ENCODE measurements at regions of chr14 and their contacts with region 1.

Region 1: DNA sequence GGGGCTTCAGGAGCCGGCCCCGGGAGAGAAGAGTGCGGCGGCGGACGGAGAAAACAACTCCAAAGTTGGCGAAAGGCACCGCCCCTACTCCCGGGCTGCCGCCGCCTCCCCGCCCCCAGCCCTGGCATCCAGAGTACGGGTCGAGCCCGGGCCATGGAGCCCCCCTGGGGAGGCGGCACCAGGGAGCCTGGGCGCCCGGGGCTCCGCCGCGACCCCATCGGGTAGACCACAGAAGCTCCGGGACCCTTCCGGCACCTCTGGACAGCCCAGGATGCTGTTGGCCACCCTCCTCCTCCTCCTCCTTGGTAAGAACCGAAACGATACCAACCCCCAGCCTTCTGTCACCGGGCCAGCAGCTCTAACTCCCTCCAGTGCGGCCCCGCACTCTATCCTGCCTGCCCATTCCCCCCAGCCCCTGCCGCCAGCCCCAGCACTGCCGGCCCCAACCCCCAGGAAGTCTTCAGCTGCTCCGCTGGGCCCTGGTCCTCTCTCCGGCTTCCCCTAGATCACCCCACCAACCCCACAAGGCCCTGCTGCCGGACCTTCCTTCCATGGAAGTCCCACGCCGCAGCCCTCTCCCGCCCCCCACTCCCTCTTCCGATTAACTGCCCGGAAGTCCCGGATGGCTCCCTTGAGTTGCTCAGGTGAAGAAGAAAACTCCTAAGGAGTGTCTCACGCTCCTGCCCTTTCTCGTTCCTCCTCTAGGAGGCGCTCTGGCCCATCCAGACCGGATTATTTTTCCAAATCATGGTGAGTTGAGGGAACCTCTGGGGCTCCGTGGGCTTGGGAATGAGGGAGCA is 693 bp downstream of the LRP10 start:
- DNase-seq: peak; percentile 64
- H3K4me3 Mint-ChIP-seq: peak overlapping the region; percentile 89
- H3K27ac Mint-ChIP-seq: peak overlapping the region; percentile 80
- H3K4me1 Mint-ChIP-seq: peaks cover 19% of the 10 kb centered on the region
- H3K27me3 Mint-ChIP-seq: no peaks in the 10 kb centered on the region

Region 2: GRCh38 chr14:22589096-22589839 is 283.0 kb before region 1 on chr14 and contains the start of gene DAD1:
- intact Hi-C with region 1: loop called (anchors 2 kb)
- DNase-seq: peak; percentile 100
- H3K4me3 Mint-ChIP-seq: peak within 1 kb of the TSS; percentile 88
- H3K27ac Mint-ChIP-seq: peak within 1 kb of the TSS; percentile 95
- H3K4me1 Mint-ChIP-seq: peaks cover 51% of the 10 kb centered on the region
- H3K27me3 Mint-ChIP-seq: peaks cover 10% of the 10 kb centered on the region
- total RNA-seq, gene DAD1: 246 and 256 TPM in 2 replicates

Region 3: GRCh38 chr14:22822571-22823098 is 49.6 kb before region 1 on chr14:
- intact Hi-C with region 1: loop called (anchors 5 kb)
- DNase-seq: peak; percentile 47
- H3K4me3 Mint-ChIP-seq: peak overlapping the region; percentile 62
- H3K27ac Mint-ChIP-seq: no peak overlapping the region
- H3K4me1 Mint-ChIP-seq: peaks cover 24% of the 10 kb centered on the region
- H3K27me3 Mint-ChIP-seq: peaks cover 19% of the 10 kb centered on the region

Region 4: DNA sequence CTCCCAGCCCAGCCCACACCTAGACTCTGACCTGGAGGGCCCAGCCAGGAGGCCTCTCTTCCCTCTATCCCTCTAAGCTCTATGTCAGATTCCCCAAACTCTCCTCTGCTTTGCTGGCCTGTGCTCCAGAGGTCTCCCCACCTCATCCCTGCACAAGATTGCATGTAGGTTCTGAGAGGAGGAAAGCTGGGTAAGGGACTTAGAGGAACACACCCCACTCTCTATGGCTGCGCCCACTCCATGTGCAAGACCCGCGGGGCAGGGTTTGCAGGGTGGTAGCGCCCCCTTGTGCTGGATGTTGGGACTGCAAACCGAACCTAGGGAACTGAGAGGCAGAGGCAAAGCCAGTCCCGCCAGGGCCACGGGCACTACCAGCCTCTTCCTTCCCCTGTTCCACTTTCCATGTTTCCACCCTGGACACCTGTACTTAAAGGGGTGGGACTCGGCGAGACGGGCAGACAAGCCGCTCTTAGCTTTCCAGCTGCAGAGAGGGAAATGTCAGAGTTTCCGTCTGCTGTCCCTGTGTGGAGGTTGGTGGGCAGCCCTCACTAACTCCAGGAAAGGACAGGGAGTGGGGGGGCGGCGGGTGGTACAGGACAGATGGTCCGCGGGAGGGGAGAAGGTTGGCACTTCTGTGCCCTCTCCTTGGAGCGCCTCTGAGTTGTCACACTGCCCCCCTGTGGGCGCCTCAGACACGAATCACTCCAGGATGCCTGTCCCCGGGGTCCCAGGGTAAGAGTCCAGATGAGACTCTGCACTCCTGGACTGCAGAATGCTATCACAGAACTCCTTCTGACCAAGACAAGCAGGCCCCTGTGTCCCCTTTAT is 19.1 kb before region 1 on chr14:
- intact Hi-C with region 1: loop called (anchors 2 kb)
- DNase-seq: peak; percentile 80
- H3K4me3 Mint-ChIP-seq: peak overlapping the region; percentile 79
- H3K27ac Mint-ChIP-seq: peak overlapping the region; percentile 40
- H3K4me1 Mint-ChIP-seq: peaks cover 24% of the 10 kb centered on the region
- H3K27me3 Mint-ChIP-seq: peaks cover 9% of the 10 kb centered on the region

Region 5: DNA sequence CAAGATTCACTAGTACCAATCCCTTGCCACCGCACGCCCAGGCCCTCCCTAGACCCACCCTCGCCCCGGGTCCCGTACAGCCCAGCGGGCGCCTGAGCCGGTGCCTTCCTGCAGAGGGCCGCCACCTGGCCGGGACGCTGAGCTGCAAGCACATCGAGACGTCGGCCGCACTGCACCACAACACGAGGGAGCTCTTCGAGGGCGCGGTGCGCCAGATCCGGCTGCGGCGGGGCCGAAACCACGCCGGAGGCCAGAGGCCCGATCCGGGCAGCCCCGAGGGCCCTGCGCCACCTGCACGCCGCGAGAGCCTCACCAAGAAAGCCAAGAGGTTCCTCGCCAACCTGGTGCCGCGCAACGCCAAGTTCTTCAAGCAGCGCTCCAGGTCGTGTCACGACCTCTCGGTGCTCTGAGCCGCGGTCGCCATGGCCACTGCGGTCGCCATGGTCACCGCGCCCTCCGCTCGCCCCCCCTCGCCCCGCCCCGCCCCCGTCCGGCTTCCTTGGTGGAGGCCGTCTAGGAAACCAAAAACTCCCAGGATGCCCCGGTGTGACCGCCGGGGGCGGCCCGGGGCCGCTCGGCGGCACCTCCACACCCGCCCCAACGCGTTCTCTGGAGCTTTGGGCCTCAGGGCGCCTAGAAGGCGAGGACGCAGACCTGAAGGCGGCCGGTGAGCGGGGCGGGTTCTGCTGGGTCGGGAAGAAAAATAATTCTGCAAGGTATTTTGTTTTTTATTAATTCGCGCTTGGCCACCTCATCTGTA is 14.4 kb after region 1 on chr14:
- intact Hi-C with region 1: loop called (anchors 1 kb)
- DNase-seq: peak; percentile 67
- H3K4me3 Mint-ChIP-seq: peak overlapping the region; percentile 80
- H3K27ac Mint-ChIP-seq: peak overlapping the region; percentile 72
- H3K4me1 Mint-ChIP-seq: peaks cover 26% of the 10 kb centered on the region
- H3K27me3 Mint-ChIP-seq: peaks cover 11% of the 10 kb centered on the region

Region 6: DNA sequence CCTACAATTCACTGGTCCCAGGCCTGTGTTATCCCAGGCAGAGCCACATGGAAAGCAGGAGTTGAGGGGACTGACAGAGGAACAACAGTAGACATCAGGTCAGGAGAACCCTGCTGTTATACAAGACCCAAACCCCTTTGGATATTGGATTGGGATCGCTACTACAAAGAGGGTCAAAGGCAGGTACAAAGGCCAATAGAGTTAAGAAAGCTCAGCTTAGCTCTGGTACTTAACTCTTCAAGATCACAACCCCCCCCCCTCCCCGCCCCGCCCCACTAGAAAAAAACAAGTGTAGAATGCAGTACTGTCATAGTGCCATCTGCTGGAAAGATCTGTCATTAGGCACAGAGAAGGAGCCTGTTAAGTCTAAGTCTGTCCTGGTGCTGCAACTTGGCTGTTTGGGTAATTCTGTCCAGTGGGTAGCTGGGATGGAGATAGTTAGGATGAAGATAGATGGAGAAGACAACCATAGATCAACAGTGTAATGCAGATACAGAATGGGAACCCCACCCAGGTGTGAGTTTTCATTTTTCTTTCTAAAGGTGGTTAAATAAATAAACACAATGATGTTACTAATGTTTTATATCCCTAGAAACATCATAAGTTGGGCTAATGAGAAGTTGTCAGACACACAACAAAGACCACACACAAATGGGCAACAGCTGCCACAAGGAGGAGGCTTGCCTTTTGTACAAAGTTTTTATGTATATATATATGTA is 28.0 kb after region 1 on chr14:
- intact Hi-C with region 1: loop called (anchors 1 kb)
- DNase-seq: peak; percentile 26
- H3K4me3 Mint-ChIP-seq: no peak overlapping the region
- H3K27ac Mint-ChIP-seq: peak overlapping the region; percentile 2
- H3K4me1 Mint-ChIP-seq: peaks cover 19% of the 10 kb centered on the region
- H3K27me3 Mint-ChIP-seq: no peaks in the 10 kb centered on the region

Region 7: DNA sequence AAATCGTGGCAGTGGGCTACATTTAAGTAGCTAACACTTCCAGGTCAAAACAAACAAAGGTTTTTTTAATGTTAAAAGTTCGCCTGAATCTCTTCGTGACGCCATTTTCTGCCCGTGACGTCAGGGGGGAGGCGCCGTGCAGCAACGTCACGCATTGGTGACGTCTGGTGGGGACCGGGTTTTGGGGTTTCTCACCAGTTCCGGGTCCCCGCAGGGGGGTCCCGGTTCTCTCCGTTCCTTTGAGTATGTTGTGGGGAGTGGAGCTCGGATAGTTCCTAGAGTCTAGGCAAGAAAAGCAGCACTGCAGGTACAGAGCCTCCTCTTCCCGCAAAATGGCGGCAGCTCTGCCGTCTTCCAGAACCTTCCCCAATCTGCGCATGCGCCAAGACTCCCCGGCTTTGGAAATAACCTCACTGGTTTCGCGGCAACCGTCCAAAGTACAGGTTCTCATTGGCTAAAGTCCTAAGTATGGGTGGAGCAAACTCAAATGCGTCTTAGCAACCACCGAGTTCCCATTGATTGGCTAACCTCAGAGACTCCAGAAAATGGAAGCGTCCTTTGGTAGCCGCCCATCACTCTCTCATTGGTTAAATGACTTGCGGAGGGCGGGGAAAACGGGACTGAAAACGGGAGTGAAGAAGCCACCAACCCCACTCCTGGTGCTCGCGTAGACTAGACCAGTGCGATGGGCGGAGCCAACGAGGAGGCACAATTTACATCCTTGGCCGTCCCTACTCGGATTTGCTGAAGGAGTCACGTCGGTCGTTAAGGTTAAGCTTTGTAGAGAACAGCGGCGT is 46.8 kb after region 1 on chr14 and contains the start of gene RBM23:
- intact Hi-C with region 1: loop called (anchors 1 kb)
- DNase-seq: peak; percentile 99
- H3K4me3 Mint-ChIP-seq: peak within 1 kb of the TSS; percentile 94
- H3K27ac Mint-ChIP-seq: peak within 1 kb of the TSS; percentile 100
- H3K4me1 Mint-ChIP-seq: peaks cover 29% of the 10 kb centered on the region
- H3K27me3 Mint-ChIP-seq: no peaks in the 10 kb centered on the region
- total RNA-seq, gene RBM23: 77.3 and 81.1 TPM in 2 replicates

Measured in activated T-helper 2 cell treated with anti-CD3 and anti-CD28 coated beads, Interferon-gamma antibody, Interleukin-2, Interleukin-4, amounts not matched to agents 10 μg/mL and 5 μg/mL and 100 μg/mL, durations not matched to agents 14 hours and 24 hours and 36 hours (primary cell).